Naive thymus-derived CD4-positive, alpha-beta T cell (primary cell): ENCODE measurements at regions of chr17 and their contacts with region 1.

Region 1: DNA sequence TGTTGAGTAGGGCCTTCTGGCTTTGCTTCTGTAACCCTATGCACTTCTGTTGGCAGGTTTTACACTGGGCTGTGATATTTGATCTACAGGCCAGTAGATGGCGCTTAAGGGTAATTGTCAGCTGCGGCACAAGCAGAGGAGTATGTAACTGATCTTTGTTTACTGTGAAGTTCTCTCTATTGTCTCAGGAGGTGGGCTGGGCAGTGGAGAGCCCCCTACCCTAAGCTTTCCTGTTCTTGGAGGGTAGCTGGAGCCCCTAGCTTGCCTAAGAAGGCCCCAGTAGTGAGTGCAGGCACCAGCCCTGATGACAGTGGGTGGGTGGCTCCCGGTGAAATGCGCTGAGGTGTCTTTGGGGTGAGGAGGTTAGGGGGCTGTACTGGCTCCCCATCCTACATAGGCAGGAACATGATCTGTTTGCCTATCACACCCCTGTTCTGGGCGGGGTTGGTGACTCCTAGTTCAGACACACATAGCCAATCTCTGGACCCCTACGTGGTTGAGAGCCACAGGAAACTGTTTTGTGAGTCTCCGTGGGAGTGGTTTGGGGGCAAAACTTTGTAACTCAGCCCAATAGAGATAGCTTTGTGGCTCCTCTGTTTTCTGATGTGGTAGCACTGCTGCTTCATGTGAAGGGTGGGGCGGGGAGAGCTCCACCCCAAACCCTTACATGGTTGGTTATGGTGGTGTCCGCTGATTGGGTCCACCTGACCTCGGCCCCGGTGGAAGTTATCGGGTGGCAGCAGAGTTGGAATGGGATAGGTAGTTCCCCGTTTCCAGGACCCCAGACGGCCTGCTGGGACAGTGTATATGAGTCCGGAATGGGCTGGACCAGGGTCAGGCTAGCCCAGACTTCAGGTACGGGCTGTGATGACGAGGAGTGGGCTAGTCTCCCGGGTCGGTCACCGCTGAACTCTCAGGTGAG is 60.4 kb downstream of the SLFN11 start:
- DNase-seq: peak; percentile 56 to 96 (median 90)
- ATAC-seq: peak; percentile 93
- H3K4me3 ChIP-seq: peak overlapping the region; percentile 70
- H3K4me3 Mint-ChIP-seq: peak overlapping the region; percentile 88 to 98 (median 96)
- H3K27ac ChIP-seq: peak overlapping the region; percentile 73
- H3K27ac Mint-ChIP-seq: peak overlapping the region; percentile 94 to 99 (median 98)
- H3K4me1 ChIP-seq: peaks cover 12 to 13% of the 10 kb centered on the region in 2 donors
- H3K4me1 Mint-ChIP-seq: peaks cover 37 to 79% (median 69%) of the 10 kb centered on the region in 7 donors
- H3K27me3 ChIP-seq: no peaks in the 10 kb centered on the region
- H3K27me3 Mint-ChIP-seq: peaks cover 0 to 5% (median 0%) of the 10 kb centered on the region in 5 donors

Region 2: DNA sequence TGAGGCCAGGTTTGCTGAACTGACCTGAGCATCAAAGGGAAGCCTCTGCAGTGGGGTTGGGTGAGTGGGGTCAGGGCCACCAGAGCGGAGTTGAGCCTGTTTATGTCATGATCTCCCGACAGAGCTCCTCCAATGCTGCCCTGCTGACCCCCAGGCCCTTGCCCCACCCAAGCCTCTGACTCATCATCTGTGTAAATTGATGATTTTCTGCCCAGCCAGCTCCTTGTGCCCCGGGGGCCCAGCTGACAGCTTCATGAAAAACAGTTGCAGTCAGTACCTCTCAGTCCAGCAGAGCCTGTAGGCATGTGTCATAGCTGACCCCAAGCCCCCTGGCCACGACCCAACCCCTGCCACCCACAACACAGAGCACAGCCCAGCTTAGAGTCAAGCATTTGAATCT is 486.7 kb before region 1 on chr17:
- CTCF ChIA-PET with region 1: no interaction called
- POLR2A ChIA-PET with region 1: no interaction called
- intact Hi-C with region 1: no loop called
- DNase-seq: no peak
- ATAC-seq: no peak
- H3K4me3 ChIP-seq: no peak overlapping the region
- H3K4me3 Mint-ChIP-seq: no peak overlapping the region
- H3K27ac ChIP-seq: no peak overlapping the region
- H3K27ac Mint-ChIP-seq: no peak overlapping the region
- H3K4me1 ChIP-seq: no peaks in the 10 kb centered on the region
- H3K4me1 Mint-ChIP-seq: peaks cover 0 to 6% (median 2%) of the 10 kb centered on the region in 7 donors
- H3K27me3 ChIP-seq: no peaks in the 10 kb centered on the region
- H3K27me3 Mint-ChIP-seq: peaks cover 0 to 10% (median 6%) of the 10 kb centered on the region in 5 donors

Region 3: DNA sequence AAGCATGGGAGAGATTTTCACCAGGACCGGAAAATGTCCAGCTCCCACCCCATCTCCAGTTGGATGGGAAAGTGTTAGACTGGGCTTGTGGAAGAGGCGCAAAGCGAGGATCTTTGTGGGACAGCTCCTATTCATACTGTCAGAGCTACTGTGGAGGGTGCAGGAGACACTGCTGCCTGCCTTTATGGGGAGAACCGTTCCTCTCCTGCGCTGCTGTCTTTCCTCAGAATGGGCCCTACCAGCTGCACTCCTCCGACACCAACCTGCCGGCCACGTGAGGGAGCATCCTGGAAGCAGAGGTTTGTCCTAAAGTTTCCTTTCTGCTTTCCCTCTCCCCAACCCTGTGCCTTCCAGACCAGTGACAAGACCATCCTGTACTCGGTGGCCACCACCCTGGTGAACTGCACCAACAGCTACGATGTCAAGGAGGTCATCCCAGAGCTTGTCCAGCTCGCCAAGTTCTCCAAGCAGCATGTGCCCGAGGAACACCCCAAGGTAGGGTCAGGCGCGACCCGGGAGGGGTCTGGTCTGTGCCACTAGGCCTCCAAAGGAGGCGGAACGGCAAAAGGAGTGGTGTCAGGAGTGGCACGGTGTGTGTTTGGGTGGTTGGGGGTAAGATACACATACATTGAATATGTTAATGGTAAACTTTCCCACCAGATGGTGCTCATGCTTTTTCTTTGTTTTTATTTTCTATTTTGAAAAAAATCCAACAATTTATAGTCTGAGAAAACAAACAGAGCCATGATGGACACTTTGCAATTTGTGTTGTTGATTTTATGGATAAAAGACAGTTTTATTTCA is 141.9 kb before region 1 on chr17:
- CTCF ChIA-PET with region 1: interaction called, 4 read pairs
- POLR2A ChIA-PET with region 1: interaction called, 5 read pairs
- intact Hi-C with region 1: loop called (anchors 1 kb)
- DNase-seq: peak in 7 of 9 donors; percentile 35 to 77 (median 70)
- ATAC-seq: peak; percentile 86
- H3K4me3 ChIP-seq: peak overlapping the region; percentile 25
- H3K4me3 Mint-ChIP-seq: peak overlapping the region in 8 of 10 donors; percentile 46 to 79 (median 70)
- H3K27ac ChIP-seq: peak overlapping the region; percentile 47
- H3K27ac Mint-ChIP-seq: peak overlapping the region; percentile 65 to 96 (median 89)
- H3K4me1 ChIP-seq: peaks cover 16 to 20% of the 10 kb centered on the region in 2 donors
- H3K4me1 Mint-ChIP-seq: peaks cover 24 to 59% (median 44%) of the 10 kb centered on the region in 7 donors
- H3K27me3 ChIP-seq: no peaks in the 10 kb centered on the region
- H3K27me3 Mint-ChIP-seq: no peaks in the 10 kb centered on the region

Region 4: DNA sequence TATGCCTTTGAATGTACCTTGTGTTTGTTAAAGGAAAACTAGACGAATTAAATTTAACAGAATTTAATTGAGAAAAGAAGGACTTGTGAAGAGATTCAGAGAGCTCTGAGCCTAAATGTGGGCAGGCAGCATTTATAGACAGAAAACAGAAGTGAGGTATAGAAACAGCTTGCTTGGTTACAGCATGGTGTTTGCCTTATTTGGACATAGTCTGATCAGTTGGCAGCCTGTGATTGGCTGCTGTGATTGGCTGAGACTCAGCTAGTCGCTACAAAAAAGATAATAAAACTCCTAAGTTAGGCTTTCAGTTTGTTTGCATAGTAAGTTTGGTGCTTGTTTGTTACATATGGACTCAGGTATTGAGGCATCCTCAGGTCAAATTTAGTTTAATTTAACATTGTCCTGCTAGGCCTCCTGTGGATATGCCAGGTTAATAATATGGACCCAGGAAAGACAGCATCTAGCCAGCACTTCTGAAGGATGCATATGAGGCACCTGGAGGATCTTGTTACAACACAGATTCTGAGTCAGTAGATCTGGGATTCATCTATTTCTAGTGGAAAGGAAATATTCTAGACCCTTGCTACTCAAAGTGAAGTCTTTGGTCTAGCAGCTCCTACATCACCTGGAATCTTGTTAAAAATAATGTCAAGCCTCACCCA is 26.8 kb before region 1 on chr17:
- CTCF ChIA-PET with region 1: interaction called, 11 read pairs
- POLR2A ChIA-PET with region 1: interaction called, 9 read pairs
- intact Hi-C with region 1: no loop called
- DNase-seq: peak in 7 of 9 donors; percentile 31 to 65 (median 56)
- ATAC-seq: peak; percentile 92
- H3K4me3 ChIP-seq: peak overlapping the region; percentile 11
- H3K4me3 Mint-ChIP-seq: peak overlapping the region in 9 of 10 donors; percentile 7 to 77 (median 60)
- H3K27ac ChIP-seq: peak overlapping the region; percentile 67
- H3K27ac Mint-ChIP-seq: peak overlapping the region; percentile 10 to 97 (median 88)
- H3K4me1 ChIP-seq: peaks cover 4 to 21% of the 10 kb centered on the region in 2 donors
- H3K4me1 Mint-ChIP-seq: peaks cover 28 to 61% (median 56%) of the 10 kb centered on the region in 7 donors
- H3K27me3 ChIP-seq: no peaks in the 10 kb centered on the region
- H3K27me3 Mint-ChIP-seq: peaks cover 0 to 19% (median 0%) of the 10 kb centered on the region in 5 donors

Region 5: GRCh38 chr17:35373534-35373983 is 60.5 kb after region 1 on chr17 and contains the start of gene SLFN11:
- CTCF ChIA-PET with region 1: interaction called, 7 read pairs
- POLR2A ChIA-PET with region 1: interaction called, 8 read pairs
- intact Hi-C with region 1: loop called (anchors 1 kb)
- DNase-seq: peak; percentile 49 to 94 (median 80)
- ATAC-seq: peak; percentile 92
- H3K4me3 ChIP-seq: peak within 1 kb of the TSS; percentile 92
- H3K4me3 Mint-ChIP-seq: peak within 1 kb of the TSS; percentile 94 to 99 (median 98)
- H3K27ac ChIP-seq: peak within 1 kb of the TSS; percentile 99
- H3K27ac Mint-ChIP-seq: peak within 1 kb of the TSS; percentile 92 to 99 (median 99)
- H3K4me1 ChIP-seq: peaks cover 2 to 13% of the 10 kb centered on the region in 2 donors
- H3K4me1 Mint-ChIP-seq: peaks cover 23 to 74% (median 54%) of the 10 kb centered on the region in 7 donors
- H3K27me3 ChIP-seq: no peaks in the 10 kb centered on the region
- H3K27me3 Mint-ChIP-seq: peaks cover 0 to 8% (median 0%) of the 10 kb centered on the region in 5 donors
- total RNA-seq, gene SLFN11: 13.8 to 71.9 (median 29.7) TPM

Region 6: GRCh38 chr17:35448214-35448898 is 135.3 kb after region 1 on chr17 and contains the start of gene SLFN13:
- CTCF ChIA-PET with region 1: no interaction called
- POLR2A ChIA-PET with region 1: interaction called, 3 read pairs
- intact Hi-C with region 1: loop called in 1 of 2 experiments (anchors 5 kb)
- DNase-seq: peak; percentile 59 to 89 (median 74)
- ATAC-seq: peak; percentile 94
- H3K4me3 ChIP-seq: peak within 1 kb of the TSS; percentile 57
- H3K4me3 Mint-ChIP-seq: peak within 1 kb of the TSS; percentile 75 to 94 (median 87)
- H3K27ac ChIP-seq: peak within 1 kb of the TSS; percentile 69
- H3K27ac Mint-ChIP-seq: peak within 1 kb of the TSS; percentile 76 to 94 (median 83)
- H3K4me1 ChIP-seq: peaks cover 7 to 14% of the 10 kb centered on the region in 2 donors
- H3K4me1 Mint-ChIP-seq: peaks cover 0 to 33% (median 26%) of the 10 kb centered on the region in 7 donors
- H3K27me3 ChIP-seq: no peaks in the 10 kb centered on the region
- H3K27me3 Mint-ChIP-seq: no peaks in the 10 kb centered on the region
- total RNA-seq, gene SLFN13: 10.5 to 64.7 (median 21.0) TPM

Region 7: DNA sequence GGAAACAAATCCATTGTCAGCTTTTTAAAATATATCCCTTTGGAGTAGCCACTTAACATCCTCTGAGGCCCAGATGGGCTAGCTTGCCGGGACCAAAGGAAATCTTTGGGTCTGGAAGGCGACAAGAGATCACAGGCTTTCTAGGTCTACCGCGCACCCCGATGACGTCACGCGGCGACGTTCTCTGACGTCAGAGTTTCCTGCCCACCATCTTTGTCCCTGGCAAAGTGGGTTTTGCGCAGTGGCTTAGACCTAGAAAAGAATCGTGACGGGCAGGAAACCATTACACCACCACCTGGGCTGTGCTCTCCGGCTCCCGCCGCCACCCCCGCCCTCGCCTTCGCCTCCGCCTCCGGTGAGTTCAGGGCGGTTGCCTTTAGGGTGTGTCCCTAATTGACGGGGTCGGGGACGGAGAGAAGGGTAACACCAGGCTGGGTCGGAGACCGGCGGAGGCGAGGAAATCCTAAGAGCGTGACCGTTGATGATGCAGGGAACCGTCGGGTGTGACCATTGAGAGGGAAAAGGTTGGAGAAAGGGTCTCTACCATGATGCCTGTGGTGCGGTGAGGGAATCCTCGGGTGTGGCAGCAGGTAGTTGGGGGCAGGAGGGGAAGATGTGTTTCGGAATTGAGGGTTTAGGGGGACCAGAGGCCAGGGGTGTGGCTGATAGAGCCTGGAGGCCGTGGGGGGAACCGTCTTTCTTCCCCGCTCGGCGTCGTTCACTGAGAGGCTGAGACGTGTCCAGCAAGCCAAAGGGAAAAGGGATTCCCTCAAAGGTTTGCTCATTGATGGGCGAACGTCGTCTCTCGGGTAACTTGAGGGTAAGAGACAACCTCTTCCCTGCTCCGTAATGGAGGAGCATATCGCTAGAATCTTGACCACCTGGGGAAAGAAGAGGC is 274.3 kb after region 1 on chr17 and contains the start of gene AP2B1:
- CTCF ChIA-PET with region 1: interaction called, 3 read pairs
- POLR2A ChIA-PET with region 1: interaction called, 3 read pairs
- intact Hi-C with region 1: loop called in 1 of 2 experiments (anchors 5 kb)
- DNase-seq: peak; percentile 96 to 100 (median 98)
- ATAC-seq: peak; percentile 99
- H3K4me3 ChIP-seq: peak within 1 kb of the TSS; percentile 85
- H3K4me3 Mint-ChIP-seq: peak within 1 kb of the TSS; percentile 92 to 99 (median 97)
- H3K27ac ChIP-seq: peak within 1 kb of the TSS; percentile 91
- H3K27ac Mint-ChIP-seq: peak within 1 kb of the TSS; percentile 95 to 99 (median 99)
- H3K4me1 ChIP-seq: peaks cover 13 to 17% of the 10 kb centered on the region in 2 donors
- H3K4me1 Mint-ChIP-seq: peaks cover 28 to 45% (median 38%) of the 10 kb centered on the region in 7 donors
- H3K27me3 ChIP-seq: no peaks in the 10 kb centered on the region
- H3K27me3 Mint-ChIP-seq: peaks cover 0 to 12% (median 0%) of the 10 kb centered on the region in 5 donors
- total RNA-seq, gene AP2B1: 84.7 to 197 (median 136) TPM